ENCODE measurements at regions of chr18 and their contacts with region 1.

Region 1: GRCh38 chr18:48663931-48664847 is 125.4 kb downstream of the CTIF start:
- DNase-seq: peak in 1 of 2 donors; percentile 86
- H3K4me3 ChIP-seq: no peak overlapping the region
- H3K27ac ChIP-seq: no peak overlapping the region
- H3K4me1 ChIP-seq: peaks cover 0 to 6% of the 10 kb centered on the region in 2 donors
- H3K27me3 ChIP-seq: no peaks in the 10 kb centered on the region
- CTCF ChIP-seq: peak; percentile 81 to 93 (median 91)

Region 2: DNA sequence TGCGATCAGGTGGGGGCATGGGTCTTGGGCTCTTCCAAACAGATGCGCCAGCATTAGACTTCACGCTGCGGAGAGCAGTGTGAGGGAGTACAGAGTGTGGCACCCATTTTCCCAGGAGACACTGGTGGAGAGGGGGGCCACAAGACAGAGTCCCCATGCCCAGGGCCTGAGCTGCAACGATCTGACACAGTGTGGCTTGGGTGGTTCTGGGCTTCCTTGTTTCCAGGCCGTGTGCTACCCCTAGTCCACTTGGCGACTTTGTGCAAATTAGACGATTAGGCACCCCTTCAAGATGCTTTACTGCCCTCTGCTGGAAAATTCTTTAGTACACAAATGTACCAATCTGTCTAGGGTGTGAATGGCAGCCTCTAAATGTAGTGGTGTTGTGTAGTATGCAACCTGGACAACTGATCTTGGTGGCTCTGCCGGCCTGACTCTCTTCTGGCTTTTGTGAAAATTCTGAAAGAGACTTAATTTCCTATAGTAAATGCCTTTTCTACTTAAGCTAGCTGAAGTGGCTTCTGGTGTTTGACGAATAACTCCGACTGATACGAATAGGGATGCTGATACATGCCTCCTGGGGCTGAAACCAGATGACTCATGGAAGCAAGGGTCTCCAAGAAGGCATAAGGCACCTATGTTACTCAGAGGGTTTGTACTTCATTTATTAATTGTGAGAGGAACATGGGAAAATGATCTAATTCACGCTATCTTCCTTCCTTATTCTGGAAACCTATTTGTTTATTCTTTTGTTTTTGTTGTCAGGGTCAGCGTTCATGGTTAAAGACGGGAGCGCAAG is 641.5 kb before region 1 on chr18:
- intact Hi-C with region 1: loop called (anchors 10 kb)
- DNase-seq: peak in 1 of 2 donors; percentile 64
- H3K4me3 ChIP-seq: no peak overlapping the region
- H3K27ac ChIP-seq: no peak overlapping the region
- H3K4me1 ChIP-seq: peaks cover 5 to 8% of the 10 kb centered on the region in 2 donors
- H3K27me3 ChIP-seq: no peaks in the 10 kb centered on the region
- CTCF ChIP-seq: peak; percentile 42 to 58 (median 47)

Region 3: GRCh38 chr18:48475635-48476549 is 188.3 kb before region 1 on chr18:
- intact Hi-C with region 1: loop called (anchors 1 kb)
- DNase-seq: peak in 1 of 2 donors; percentile 78
- H3K4me3 ChIP-seq: no peak overlapping the region
- H3K27ac ChIP-seq: no peak overlapping the region
- H3K4me1 ChIP-seq: no peaks in the 10 kb centered on the region
- H3K27me3 ChIP-seq: no peaks in the 10 kb centered on the region
- CTCF ChIP-seq: peak; percentile 53 to 90 (median 88)

Measured in ascending aorta (tissue), 2 donors.